ENCODE measurements at regions of chr11 and their contacts with region 1.

Region 1: GRCh38 chr11:111283945-111284481 is 14.3 kb upstream of the POU2AF3 start:
- DNase-seq: peak; percentile 73
- ATAC-seq: peak; percentile 57

Region 2: GRCh38 chr11:111422494-111423249 is 138.7 kb after region 1 on chr11:
- intact Hi-C with region 1: loop called (anchors 1 kb)
- DNase-seq: no peak
- ATAC-seq: peak; percentile 76

Region 3: DNA sequence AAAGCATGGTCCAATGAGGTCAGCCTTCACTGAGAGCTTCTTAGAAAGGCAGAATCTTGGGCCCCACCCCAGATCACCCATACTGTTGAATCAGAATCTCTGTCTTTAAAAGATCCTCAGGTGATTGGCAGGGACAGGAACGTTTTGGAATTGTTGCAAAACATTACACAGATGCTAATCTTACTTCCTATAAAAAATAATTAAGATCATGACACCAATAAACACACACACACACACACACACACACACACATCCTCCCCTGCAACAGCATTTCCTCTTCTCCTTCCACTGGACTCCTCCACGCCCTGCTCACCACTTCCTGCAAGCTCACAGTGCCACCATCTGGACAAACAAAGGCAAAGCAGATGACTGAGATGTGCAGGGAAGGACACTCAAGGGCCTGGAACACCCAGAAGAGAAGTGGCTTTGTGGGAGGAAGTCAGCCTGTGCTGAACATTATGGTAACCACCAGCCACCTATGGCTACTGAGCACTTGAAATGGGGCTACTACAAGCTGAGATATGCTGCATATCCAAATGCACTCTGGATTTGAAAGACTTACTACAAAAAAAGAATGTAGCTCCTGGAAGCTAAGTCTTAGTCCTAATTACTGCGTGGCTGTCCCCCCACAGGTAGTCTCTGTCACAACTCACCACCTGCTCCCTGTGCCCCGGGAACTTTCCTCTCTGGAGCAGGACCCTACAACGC is 162.5 kb after region 1 on chr11:
- intact Hi-C with region 1: loop called (anchors 1 kb)
- DNase-seq: peak; percentile 77
- ATAC-seq: peak; percentile 91

Region 4: GRCh38 chr11:111540114-111540936 is 256.3 kb after region 1 on chr11 and contains the start of gene LAYN:
- intact Hi-C with region 1: loop called (anchors 10 kb)
- DNase-seq: peak; percentile 68
- ATAC-seq: peak; percentile 47
- total RNA-seq, gene LAYN: 3.7 TPM

Measured in Right ventricle myocardium inferior (tissue), 1 donor.